Breast epithelium (tissue), 4 donors: ENCODE measurements at regions of chr11 and their contacts with region 1.

Region 1: DNA sequence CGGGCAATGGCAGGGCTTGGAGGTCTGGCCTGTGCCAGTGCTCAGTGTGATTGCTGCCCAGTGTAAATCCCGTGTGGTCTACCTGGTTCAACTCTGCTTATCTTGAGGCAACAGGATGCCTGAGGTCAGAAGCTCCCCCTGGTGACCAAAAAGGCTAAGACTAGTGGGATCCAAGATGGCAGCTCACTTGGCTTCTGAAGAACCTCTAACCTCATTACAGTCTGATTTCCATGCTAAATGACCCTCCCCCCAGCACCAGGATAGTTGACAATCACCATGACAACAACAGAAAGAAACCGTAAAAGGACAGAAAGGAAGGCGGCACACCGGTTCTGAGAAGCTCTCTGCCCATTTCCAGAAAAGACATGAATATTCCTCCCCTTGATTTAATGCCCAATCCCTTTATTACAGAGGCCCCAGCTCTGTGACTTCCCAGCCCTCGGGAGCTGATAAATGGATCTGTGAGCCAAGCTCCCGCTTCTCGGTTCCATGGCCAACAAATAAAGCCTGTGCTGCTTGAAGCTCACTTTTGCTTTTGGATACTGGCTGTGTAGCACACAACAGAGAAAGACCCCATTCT is 398.4 kb downstream of the CTTN start:
- DNase-seq: no peak
- H3K4me3 ChIP-seq: no peak overlapping the region
- H3K27ac ChIP-seq: no peak overlapping the region
- H3K4me1 ChIP-seq: no peaks in the 10 kb centered on the region
- H3K27me3 ChIP-seq: no peaks in the 10 kb centered on the region
- CTCF ChIP-seq: no peak
- POLR2A ChIP-seq: no peak

Region 2: DNA sequence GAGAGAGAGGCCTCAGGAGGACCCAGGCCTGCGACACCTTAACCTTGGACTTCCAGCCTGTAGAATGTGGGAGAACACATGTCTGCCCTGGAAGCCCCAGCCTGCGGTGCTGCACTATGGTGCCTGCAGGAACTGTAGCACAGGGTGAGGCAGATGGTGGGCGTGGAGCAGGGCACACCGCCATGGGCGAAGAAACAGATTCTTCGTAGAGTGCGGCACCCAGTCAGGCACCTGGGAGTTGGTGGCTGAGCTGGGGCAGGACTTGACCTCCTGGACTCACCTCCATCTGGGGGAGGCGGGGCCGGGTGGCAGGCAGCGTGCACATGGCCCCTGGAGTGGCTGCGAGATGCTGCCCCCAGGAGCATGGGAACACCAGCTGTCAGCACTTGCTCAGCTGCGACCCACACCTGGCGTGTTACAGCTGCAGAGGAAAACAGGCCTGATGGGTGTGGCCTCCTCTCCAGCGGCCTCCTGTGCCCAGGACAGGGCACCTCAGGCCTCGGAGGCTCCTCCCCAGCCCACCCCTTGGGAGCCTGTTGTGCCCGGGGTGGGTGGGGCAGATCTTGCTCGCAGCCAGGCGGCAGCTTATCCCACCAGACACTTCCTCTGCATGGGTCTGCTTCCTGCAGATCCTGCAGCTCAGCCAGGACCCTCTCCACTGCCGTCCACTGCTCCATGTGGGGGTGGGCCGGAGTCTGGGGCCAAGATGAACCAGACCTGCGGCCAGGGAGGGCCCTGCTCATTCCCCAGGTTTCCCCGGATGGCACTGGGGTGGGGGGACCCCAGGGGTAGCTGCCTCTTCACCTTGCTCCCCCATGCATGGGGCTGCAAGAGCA is 1422.4 kb before region 1 on chr11:
- intact Hi-C with region 1: loop called (anchors 5 kb)
- DNase-seq: peak in 1 of 2 donors; percentile 47
- H3K4me3 ChIP-seq: no peak overlapping the region
- H3K27ac ChIP-seq: no peak overlapping the region
- H3K4me1 ChIP-seq: peaks cover 0 to 5% of the 10 kb centered on the region in 2 donors
- H3K27me3 ChIP-seq: no peaks in the 10 kb centered on the region
- CTCF ChIP-seq: no peak
- POLR2A ChIP-seq: no peak